PC-3 (cell line): ENCODE measurements at regions of chr5 and their contacts with region 1.

Region 1: GRCh38 chr5:12245429-12245828 is 341.2 kb upstream of the CTNND2 start:
- DNase-seq: peak; percentile 94
- ATAC-seq: peak; percentile 75
- H3K4me3 ChIP-seq: no peak overlapping the region
- H3K27ac ChIP-seq: peak overlapping the region; percentile 84
- H3K4me1 ChIP-seq: peaks cover 52% of the 10 kb centered on the region
- H3K27me3 ChIP-seq: no peaks in the 10 kb centered on the region
- CTCF ChIP-seq: no peak

Region 2: DNA sequence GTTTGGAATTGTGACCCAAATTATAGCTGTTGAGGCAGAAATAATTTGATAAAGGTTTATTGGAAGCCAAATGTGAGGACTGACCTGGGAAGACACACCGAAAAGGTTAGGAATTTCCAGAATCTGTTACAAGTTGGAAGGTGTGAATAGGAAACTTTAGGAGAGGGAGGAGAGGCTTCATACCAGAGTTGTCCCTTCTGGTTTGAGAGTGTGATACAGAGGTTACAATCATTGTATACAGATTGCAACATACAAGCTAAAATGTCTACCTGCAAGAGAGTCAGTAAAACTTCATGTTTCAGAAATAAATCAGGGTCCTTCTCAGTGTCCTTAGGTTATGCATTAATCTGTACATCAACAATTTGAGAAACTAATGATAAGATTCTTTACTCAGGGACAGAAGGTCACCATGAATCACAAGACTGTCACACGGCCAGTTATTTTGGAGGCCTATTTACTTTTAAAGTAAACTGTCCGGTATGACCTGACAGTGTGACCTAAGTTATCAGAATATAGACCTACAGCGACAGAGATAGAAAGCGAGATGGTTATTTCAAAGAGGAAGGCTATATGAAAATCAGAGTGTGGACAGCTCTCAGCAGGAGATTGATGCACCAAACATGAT is 136.2 kb before region 1 on chr5:
- CTCF ChIA-PET with region 1: no interaction called
- POLR2A ChIA-PET with region 1: no interaction called
- intact Hi-C with region 1: loop called (anchors 5 kb)
- DNase-seq: no peak
- ATAC-seq: no peak
- H3K4me3 ChIP-seq: no peak overlapping the region
- H3K27ac ChIP-seq: no peak overlapping the region
- H3K4me1 ChIP-seq: no peaks in the 10 kb centered on the region
- H3K27me3 ChIP-seq: no peaks in the 10 kb centered on the region
- CTCF ChIP-seq: no peak

Region 3: DNA sequence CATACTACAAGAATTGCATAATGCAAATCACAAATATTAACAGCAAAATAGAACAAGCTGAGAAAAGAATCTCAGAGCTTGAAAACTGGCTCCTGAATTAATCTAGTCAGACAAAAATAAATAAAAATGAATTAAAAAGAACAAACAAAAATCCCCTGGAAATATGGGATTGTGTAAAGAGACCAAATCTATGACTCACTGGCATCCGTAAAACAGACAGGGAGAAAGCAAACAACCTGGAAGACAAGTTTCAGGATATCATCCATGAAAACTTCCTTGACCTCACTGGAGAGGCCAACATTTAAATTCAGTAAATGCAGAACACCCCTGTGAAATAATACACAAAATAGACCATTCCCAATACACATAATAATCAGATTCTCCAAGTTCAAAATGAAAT is 111.9 kb before region 1 on chr5:
- CTCF ChIA-PET with region 1: no interaction called
- POLR2A ChIA-PET with region 1: interaction called, 26 read pairs
- intact Hi-C with region 1: no loop called
- DNase-seq: peak; percentile 63
- ATAC-seq: peak; percentile 55; the same call in 1 of the 2 replicates
- H3K4me3 ChIP-seq: no peak overlapping the region
- H3K27ac ChIP-seq: no peak overlapping the region
- H3K4me1 ChIP-seq: peaks cover 4% of the 10 kb centered on the region; the same call in 1 of the 2 replicates
- H3K27me3 ChIP-seq: no peaks in the 10 kb centered on the region
- CTCF ChIP-seq: no peak